ENCODE measurements at regions of chr9 and their contacts with region 1.

Region 1: GRCh38 chr9:36036780-36037548 is at the start of gene RECK:
- DNase-seq: peak; percentile 30
- ATAC-seq: peak; percentile 98
- H3K4me3 ChIP-seq: peak within 1 kb of the TSS; percentile 61 to 75
- H3K27ac ChIP-seq: peak within 1 kb of the TSS; percentile 82
- H3K4me1 ChIP-seq: peaks cover 9% of the 10 kb centered on the region
- H3K27me3 ChIP-seq: peaks cover 7% of the 10 kb centered on the region
- CTCF ChIP-seq: no peak
- total RNA-seq, gene RECK: 13.2 TPM

Region 2: DNA sequence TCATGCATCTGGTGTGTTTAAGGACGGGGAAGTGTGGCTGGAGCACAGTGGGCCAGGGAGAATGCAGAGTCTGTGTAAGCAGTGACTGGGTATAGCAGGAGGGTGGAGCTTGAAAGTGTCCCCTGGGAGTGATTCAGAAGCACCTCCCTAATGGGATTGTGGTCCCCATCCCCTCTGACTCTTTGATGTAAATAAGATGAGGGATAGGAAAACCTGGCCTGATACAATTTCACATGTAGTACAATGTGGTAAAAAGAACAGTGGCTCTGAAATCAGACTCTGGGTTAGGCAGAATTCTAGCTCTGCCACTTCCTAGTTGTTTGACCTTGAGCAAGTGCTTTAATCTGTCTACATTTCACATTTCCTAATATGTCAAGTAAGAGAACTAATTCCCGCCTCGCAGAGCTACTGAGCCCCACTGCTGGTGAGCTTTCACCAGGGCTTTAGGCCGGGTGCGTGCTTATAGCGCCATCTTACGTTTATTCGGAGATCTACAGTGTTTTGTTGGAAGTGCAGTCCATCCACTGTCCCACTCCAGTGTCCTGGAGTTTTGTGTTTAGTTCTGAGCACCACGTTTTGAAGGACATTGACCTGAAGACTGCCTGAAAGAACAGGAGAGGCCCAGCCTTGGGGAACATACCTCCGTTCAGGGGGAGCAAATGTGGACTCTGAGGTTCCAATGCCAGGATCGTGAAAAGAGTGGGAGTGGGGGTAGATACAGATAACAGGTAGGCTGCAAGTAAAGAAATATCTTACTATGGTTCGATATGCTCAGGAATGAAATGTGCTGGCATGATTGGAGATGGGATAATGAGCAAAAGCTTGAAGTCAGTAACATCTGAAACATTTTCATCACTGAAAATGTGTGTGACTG is 483.1 kb before region 1 on chr9:
- CTCF ChIA-PET with region 1: no interaction called
- POLR2A ChIA-PET with region 1: no interaction called
- in situ Hi-C with region 1: no loop called
- intact Hi-C with region 1: no loop called
- DNase-seq: peak; percentile 51
- ATAC-seq: peak; percentile 89
- H3K4me3 ChIP-seq: no peak overlapping the region
- H3K27ac ChIP-seq: peak overlapping the region; percentile 82
- H3K4me1 ChIP-seq: peaks cover 21% of the 10 kb centered on the region
- H3K27me3 ChIP-seq: no peaks in the 10 kb centered on the region
- CTCF ChIP-seq: no peak

Region 3: GRCh38 chr9:36053971-36054370 is 17.0 kb after region 1 on chr9:
- CTCF ChIA-PET with region 1: no interaction called
- POLR2A ChIA-PET with region 1: interaction called, 20 read pairs
- in situ Hi-C with region 1: no loop called
- intact Hi-C with region 1: no loop called
- DNase-seq: no peak
- ATAC-seq: peak; percentile 51; the same call in 1 of the 2 replicates
- H3K4me3 ChIP-seq: no peak overlapping the region
- H3K27ac ChIP-seq: no peak overlapping the region
- H3K4me1 ChIP-seq: no peaks in the 10 kb centered on the region
- H3K27me3 ChIP-seq: no peaks in the 10 kb centered on the region
- CTCF ChIP-seq: no peak

Region 4: DNA sequence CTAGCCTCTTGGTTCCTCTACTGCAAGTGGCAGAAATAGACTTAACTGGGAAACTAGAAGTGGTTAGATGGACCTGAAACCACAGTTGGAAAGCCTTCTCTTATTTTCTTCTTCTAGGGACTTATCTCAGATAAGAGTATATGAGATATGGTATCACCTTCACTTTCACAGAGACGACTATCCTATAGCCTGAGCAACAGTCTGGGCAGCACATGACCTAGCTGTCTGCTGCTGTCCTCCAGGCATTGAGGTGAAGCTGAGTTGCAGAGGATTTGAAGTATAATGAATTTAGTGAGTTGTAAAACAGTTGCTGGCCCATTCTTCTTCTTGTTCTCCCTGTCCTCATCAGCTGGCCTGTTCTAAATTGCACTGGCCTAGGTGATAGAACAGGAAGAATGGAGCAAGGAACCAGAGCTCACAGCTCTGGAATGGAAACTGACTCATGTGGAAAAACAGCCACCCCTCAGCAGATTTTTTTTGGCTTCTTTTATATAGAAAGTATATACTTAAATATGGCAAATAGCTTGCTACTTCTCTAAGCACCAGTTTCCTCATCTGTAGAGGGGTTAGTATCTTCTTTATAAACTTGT is 27.6 kb after region 1 on chr9:
- CTCF ChIA-PET with region 1: interaction called, 6 read pairs
- POLR2A ChIA-PET with region 1: interaction called, 14 read pairs
- in situ Hi-C with region 1: no loop called
- intact Hi-C with region 1: no loop called
- DNase-seq: no peak
- ATAC-seq: no peak
- H3K4me3 ChIP-seq: no peak overlapping the region
- H3K27ac ChIP-seq: no peak overlapping the region
- H3K4me1 ChIP-seq: no peaks in the 10 kb centered on the region
- H3K27me3 ChIP-seq: no peaks in the 10 kb centered on the region
- CTCF ChIP-seq: no peak

Region 5: DNA sequence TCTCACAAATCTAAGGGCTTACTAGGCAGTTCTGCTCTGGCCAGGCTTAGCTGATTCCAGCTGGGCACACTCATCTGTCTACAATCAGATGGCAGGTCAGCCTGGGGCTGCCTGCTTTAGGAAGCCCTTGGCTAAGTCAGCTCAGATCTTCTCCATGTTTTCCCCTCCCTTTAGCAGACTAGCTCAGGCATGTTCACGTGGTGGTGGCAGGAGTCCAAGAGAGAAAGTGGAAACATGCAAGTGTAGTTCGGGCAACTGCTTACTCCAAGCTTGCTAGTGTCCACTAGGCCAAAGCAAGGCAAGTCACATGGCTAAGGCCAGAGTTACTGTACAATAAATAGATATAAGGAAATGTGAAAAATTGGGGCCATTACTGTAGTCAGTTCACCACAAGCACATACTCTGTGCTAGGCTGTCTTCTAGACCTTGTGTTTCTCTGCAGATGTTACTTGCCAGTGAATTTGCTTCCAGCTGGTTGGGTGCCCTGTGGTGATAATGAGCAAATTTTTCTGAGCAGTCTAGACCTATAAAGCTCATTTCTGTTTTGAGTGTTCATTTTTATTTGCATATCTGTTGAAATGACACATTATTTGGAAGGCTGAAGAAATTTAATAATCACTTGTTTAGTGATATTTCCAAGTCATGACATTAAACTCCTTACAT is 38.0 kb after region 1 on chr9:
- CTCF ChIA-PET with region 1: no interaction called
- POLR2A ChIA-PET with region 1: interaction called, 10 read pairs
- in situ Hi-C with region 1: no loop called
- intact Hi-C with region 1: no loop called
- DNase-seq: no peak
- ATAC-seq: no peak; the same call in 1 of the 2 replicates
- H3K4me3 ChIP-seq: no peak overlapping the region
- H3K27ac ChIP-seq: no peak overlapping the region
- H3K4me1 ChIP-seq: no peaks in the 10 kb centered on the region
- H3K27me3 ChIP-seq: no peaks in the 10 kb centered on the region
- CTCF ChIP-seq: no peak

Region 6: GRCh38 chr9:36086442-36086841 is 49.5 kb after region 1 on chr9:
- CTCF ChIA-PET with region 1: no interaction called
- POLR2A ChIA-PET with region 1: interaction called, 20 read pairs
- in situ Hi-C with region 1: no loop called
- intact Hi-C with region 1: no loop called
- DNase-seq: no peak
- ATAC-seq: no peak
- H3K4me3 ChIP-seq: no peak overlapping the region
- H3K27ac ChIP-seq: no peak overlapping the region
- H3K4me1 ChIP-seq: no peaks in the 10 kb centered on the region
- H3K27me3 ChIP-seq: no peaks in the 10 kb centered on the region
- CTCF ChIP-seq: no peak

Region 7: DNA sequence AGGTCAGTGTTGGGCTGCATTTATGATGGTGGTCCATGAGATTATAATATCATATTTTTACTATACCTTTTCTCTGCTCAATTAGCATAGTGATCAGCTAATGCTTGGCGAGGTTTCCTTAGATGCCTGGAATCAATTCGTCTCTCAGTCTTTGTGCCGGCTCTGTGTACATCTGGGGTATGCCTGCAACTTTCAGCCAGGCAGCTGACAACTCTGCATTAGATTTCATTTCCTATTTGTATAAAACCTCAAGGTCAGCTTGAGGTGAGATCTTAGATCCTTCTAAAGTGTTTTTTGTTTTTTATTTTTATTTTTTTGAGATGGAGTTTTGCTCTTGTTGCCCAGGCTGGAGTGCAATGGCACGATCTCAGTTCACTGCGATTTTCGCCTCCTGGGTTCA is 622.5 kb after region 1 on chr9:
- CTCF ChIA-PET with region 1: no interaction called
- POLR2A ChIA-PET with region 1: no interaction called
- in situ Hi-C with region 1: no loop called
- intact Hi-C with region 1: no loop called
- DNase-seq: no peak
- ATAC-seq: no peak
- H3K4me3 ChIP-seq: no peak overlapping the region
- H3K27ac ChIP-seq: no peak overlapping the region
- H3K4me1 ChIP-seq: no peaks in the 10 kb centered on the region
- H3K27me3 ChIP-seq: no peaks in the 10 kb centered on the region
- CTCF ChIP-seq: no peak